ENCODE measurements at regions of chr3 and their contacts with region 1.

Region 1: DNA sequence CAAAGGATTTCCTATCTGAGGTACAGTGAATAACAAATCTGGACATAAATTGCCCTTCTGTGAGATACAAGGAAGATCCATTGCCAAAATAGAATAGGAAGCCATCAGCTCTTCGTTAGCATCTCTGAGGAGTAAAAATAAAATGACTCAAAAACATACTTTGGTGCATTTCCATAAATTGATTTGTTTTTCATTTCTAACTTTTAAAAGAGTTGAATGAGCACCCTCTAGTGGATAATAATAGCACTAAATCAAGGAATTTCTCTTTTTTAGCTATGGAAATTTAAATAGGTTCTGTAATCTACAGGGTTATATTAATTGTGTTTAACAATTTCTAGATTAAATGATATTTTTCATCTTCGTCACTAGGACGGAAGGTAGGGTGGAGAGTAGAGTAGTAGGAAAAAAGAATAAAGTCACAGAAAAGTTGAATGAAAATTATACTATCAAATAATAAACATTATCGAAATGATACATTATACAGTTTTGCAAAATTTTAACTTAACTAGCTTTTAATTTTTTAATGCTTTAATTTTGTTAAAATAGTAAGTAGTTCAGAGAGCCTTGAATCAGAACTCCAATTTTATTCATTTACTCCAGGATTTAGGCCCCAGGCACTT is 6.4 kb downstream of the NSUN3 start:
- DNase-seq: peak in 1 of 35 experiments; percentile 34
- ATAC-seq: peak in 1 of 4 experiments; percentile 38
- H3K4me3 ChIP-seq: no peak overlapping the region
- H3K4me3 Mint-ChIP-seq: no peak overlapping the region
- H3K27ac ChIP-seq: no peak overlapping the region
- H3K27ac Mint-ChIP-seq: peak overlapping the region; percentile 38 to 42
- H3K4me1 ChIP-seq: peaks cover 0 to 12% of the 10 kb centered on the region in 2 experiments
- H3K4me1 Mint-ChIP-seq: peaks cover 56 to 78% (median 74%) of the 10 kb centered on the region in 3 donors
- H3K27me3 ChIP-seq: no peaks in the 10 kb centered on the region
- H3K27me3 Mint-ChIP-seq: no peaks in the 10 kb centered on the region

Region 2: DNA sequence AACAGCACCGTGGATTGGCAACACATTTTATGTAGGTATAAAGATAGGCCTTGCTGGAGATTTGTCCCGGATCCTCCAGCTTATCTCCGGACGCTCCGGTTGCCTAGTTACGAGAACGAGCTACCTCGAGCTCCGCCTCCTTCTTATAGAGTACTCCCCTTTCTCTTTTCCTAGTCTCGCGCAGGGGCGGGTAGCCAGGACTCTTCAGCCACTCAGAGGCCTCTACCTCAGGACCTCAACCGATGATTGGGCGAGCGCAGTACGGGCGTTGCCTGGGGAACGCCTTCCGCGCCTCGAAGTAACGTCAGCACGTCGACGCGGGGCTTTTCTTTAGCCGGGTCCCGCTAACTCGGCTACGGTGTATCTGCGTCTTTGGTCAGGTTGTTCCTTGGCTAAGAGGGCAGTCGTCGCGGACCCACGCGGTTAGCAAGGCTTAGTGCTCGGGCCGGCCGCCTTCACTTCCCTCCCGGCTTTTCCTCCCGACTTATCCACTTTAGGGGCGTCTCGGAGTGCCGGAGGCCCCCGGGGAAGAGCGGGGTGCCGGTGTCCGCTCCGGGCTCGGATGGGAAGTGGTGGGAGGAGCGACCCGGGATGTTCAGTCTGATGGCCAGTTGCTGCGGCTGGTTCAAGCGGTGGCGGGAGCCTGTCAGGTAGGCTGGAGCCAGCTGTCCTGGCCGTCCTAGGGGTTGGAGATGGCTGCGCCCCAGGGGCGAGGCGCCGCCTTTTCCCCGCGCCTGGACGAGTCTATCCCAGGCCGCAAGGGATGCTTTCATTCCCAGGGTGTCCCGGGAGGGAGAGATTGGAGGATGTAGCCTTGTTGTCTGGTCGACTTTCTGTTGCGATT is 89.2 kb before region 1 on chr3 and contains the start of gene ARL13B:
- CTCF ChIA-PET with region 1: interaction called, 3 to 12 read pairs
- POLR2A ChIA-PET with region 1: no interaction called
- DNase-seq: peak; percentile 81 to 97 (median 93)
- ATAC-seq: peak; percentile 100
- H3K4me3 ChIP-seq: peak within 1 kb of the TSS; percentile 87 to 89
- H3K4me3 Mint-ChIP-seq: peak within 1 kb of the TSS; percentile 84 to 89 (median 87)
- H3K27ac ChIP-seq: peak within 1 kb of the TSS; percentile 83
- H3K27ac Mint-ChIP-seq: peak within 1 kb of the TSS; percentile 71 to 88
- H3K4me1 ChIP-seq: peaks cover 8 to 9% of the 10 kb centered on the region in 2 experiments
- H3K4me1 Mint-ChIP-seq: peaks cover 21 to 23% (median 23%) of the 10 kb centered on the region in 3 donors
- H3K27me3 ChIP-seq: no peaks in the 10 kb centered on the region
- H3K27me3 Mint-ChIP-seq: no peaks in the 10 kb centered on the region
- total RNA-seq, gene ARL13B: 6.0 to 11.5 (median 9.2) TPM

Region 3: GRCh38 chr3:94004301-94004910 is 64.9 kb before region 1 on chr3:
- CTCF ChIA-PET with region 1: interaction called, 13 to 46 read pairs
- POLR2A ChIA-PET with region 1: no interaction called
- DNase-seq: peak in 3 of 35 experiments; percentile 0 to 73 (median 8)
- ATAC-seq: peak; percentile 73 to 86 (median 78)
- H3K4me3 ChIP-seq: no peak overlapping the region
- H3K4me3 Mint-ChIP-seq: peak overlapping the region; percentile 18 to 72 (median 66)
- H3K27ac ChIP-seq: no peak overlapping the region
- H3K27ac Mint-ChIP-seq: peak overlapping the region; percentile 28 to 59
- H3K4me1 ChIP-seq: no peaks in the 10 kb centered on the region
- H3K4me1 Mint-ChIP-seq: peaks cover 2 to 5% (median 4%) of the 10 kb centered on the region in 3 donors
- H3K27me3 ChIP-seq: no peaks in the 10 kb centered on the region
- H3K27me3 Mint-ChIP-seq: no peaks in the 10 kb centered on the region

Region 4: DNA sequence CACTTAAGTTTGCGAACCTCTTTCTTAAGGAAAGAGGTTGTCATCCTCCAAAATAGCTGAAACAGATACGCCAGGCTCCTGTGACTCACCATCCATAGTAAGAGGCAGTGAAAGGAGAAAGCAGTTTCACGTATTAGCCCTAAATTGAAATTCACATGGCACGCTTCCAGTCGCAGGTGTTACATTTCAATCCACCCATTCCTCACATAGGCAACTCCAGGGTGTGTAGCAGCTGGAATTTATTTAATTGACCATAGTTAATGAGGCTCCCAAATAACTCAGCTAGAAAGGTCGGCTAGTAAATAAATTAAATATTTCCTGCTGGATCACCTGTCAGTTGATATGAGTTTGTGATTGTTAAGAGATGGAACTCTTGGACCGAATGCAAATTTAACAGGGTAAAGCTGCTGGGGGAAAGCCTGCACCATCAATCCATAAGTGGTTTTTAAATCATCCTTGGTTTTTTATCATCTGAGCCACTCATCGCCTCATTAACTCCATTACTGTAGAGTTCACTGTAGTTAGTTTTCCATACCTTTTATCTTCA is 13.2 kb after region 1 on chr3:
- CTCF ChIA-PET with region 1: interaction called, 4 to 14 read pairs
- POLR2A ChIA-PET with region 1: no interaction called
- DNase-seq: no peak
- ATAC-seq: no peak
- H3K4me3 ChIP-seq: no peak overlapping the region
- H3K4me3 Mint-ChIP-seq: no peak overlapping the region
- H3K27ac ChIP-seq: no peak overlapping the region
- H3K27ac Mint-ChIP-seq: peak overlapping the region in 1 of 2 donors; percentile 28
- H3K4me1 ChIP-seq: peaks cover 0 to 14% of the 10 kb centered on the region in 2 experiments
- H3K4me1 Mint-ChIP-seq: peaks cover 43 to 53% (median 48%) of the 10 kb centered on the region in 3 donors
- H3K27me3 ChIP-seq: no peaks in the 10 kb centered on the region
- H3K27me3 Mint-ChIP-seq: no peaks in the 10 kb centered on the region

Region 5: DNA sequence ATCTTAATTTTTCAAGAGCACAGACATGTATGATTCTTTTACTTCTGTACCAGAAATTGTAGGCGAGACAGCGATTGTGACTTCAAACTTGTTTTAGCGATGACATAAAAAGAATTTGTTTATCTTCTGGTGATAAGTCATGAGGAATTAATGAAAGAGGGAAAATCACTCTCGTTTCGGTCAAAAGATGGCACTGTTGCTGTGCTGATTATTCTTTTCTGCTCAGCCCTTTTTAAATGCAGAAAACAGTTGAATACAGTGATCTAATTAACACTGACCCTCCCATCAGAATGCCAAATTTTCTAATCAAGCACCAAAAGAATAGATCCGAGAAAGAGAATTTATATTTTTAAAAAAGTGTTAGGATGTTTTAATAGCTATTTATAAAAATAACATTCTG is 46.2 kb after region 1 on chr3:
- CTCF ChIA-PET with region 1: no interaction called
- POLR2A ChIA-PET with region 1: no interaction called
- DNase-seq: no peak
- ATAC-seq: no peak
- H3K4me3 ChIP-seq: no peak overlapping the region
- H3K4me3 Mint-ChIP-seq: no peak overlapping the region
- H3K27ac ChIP-seq: no peak overlapping the region
- H3K27ac Mint-ChIP-seq: no peak overlapping the region
- H3K4me1 ChIP-seq: no peaks in the 10 kb centered on the region
- H3K4me1 Mint-ChIP-seq: peaks cover 0 to 9% (median 6%) of the 10 kb centered on the region in 3 donors
- H3K27me3 ChIP-seq: no peaks in the 10 kb centered on the region
- H3K27me3 Mint-ChIP-seq: no peaks in the 10 kb centered on the region